Activated T-helper 2 cell treated with anti-CD3 and anti-CD28 coated beads, Interferon-gamma antibody, Interleukin-2, Interleukin-4, amounts not matched to agents 10 μg/mL and 5 μg/mL and 100 μg/mL, durations not matched to agents 14 hours and 24 hours and 36 hours (primary cell): ENCODE measurements at regions of chr7 and their contacts with region 1.

Region 1: GRCh38 chr7:100896732-100897608 is 1.3 kb upstream of the ACHE start:
- DNase-seq: no peak
- H3K4me3 Mint-ChIP-seq: peak overlapping the region; percentile 21
- H3K27ac Mint-ChIP-seq: no peak overlapping the region
- H3K4me1 Mint-ChIP-seq: peaks cover 5% of the 10 kb centered on the region
- H3K27me3 Mint-ChIP-seq: peaks cover 45% of the 10 kb centered on the region

Region 2: GRCh38 chr7:100373261-100373831 is 523.6 kb before region 1 on chr7 and contains the start of gene PILRA:
- intact Hi-C with region 1: no loop called
- DNase-seq: no peak
- H3K4me3 Mint-ChIP-seq: no peak within 1 kb of the TSS
- H3K27ac Mint-ChIP-seq: peak within 1 kb of the TSS; percentile 68
- H3K4me1 Mint-ChIP-seq: peaks cover 11% of the 10 kb centered on the region
- H3K27me3 Mint-ChIP-seq: no peaks in the 10 kb centered on the region
- total RNA-seq, gene PILRA: 12.3 TPM in 2 replicates

Region 3: GRCh38 chr7:100867040-100867775 is 29.8 kb before region 1 on chr7 and contains the start of gene TRIP6:
- intact Hi-C with region 1: no loop called
- DNase-seq: peak; percentile 46
- H3K4me3 Mint-ChIP-seq: peak within 1 kb of the TSS; percentile 94
- H3K27ac Mint-ChIP-seq: peak within 1 kb of the TSS; percentile 93
- H3K4me1 Mint-ChIP-seq: peaks cover 8% of the 10 kb centered on the region
- H3K27me3 Mint-ChIP-seq: no peaks in the 10 kb centered on the region
- total RNA-seq, gene TRIP6: 38.5 and 38.7 TPM in 2 replicates

Region 4: GRCh38 chr7:101059627-101059942 is 162.6 kb after region 1 on chr7:
- intact Hi-C with region 1: loop called (anchors 1 kb)
- DNase-seq: no peak
- H3K4me3 Mint-ChIP-seq: no peak overlapping the region
- H3K27ac Mint-ChIP-seq: no peak overlapping the region
- H3K4me1 Mint-ChIP-seq: peaks cover 2% of the 10 kb centered on the region
- H3K27me3 Mint-ChIP-seq: peaks cover 14% of the 10 kb centered on the region

Region 5: GRCh38 chr7:101077303-101078089 is 180.5 kb after region 1 on chr7:
- intact Hi-C with region 1: loop called (anchors 1 kb)
- DNase-seq: peak; percentile 71
- H3K4me3 Mint-ChIP-seq: no peak overlapping the region
- H3K27ac Mint-ChIP-seq: no peak overlapping the region
- H3K4me1 Mint-ChIP-seq: peaks cover 4% of the 10 kb centered on the region
- H3K27me3 Mint-ChIP-seq: peaks cover 5% of the 10 kb centered on the region

Region 6: DNA sequence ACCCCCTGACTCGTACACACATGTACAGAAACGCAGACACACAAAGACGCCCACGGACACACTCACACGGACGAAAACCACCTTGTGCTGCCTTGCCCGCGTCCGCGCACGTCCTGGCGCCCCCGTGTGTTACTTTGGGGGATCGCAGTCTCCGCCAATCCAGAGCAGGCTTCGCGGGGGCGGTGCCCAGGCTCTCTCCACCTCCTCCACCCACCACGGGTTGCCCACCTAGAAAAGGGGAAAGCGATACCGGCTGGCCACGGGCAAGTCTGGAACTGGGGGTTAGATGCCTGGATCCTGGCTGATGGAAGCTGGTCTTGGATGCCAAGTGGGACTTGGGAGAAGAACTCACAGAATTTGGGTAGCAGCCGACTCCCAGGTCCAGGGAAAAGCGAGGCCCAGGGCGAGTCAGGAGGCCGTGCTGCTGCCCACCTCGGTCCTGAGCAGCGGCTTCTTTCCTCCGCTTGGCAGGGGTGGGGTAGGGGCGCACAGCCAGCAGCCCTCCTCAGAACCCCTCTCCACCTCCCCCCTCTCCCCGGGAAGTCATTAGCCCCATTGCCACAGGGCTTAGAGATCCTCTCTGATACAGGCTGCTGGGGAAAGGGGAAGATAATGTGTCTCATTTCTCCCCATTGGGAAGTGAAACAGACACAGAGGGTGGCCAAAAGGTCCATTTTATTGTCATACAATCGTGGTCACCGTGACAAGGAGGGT is 273.0 kb after region 1 on chr7:
- intact Hi-C with region 1: no loop called
- DNase-seq: peak; percentile 74
- H3K4me3 Mint-ChIP-seq: peak overlapping the region; percentile 51
- H3K27ac Mint-ChIP-seq: no peak overlapping the region
- H3K4me1 Mint-ChIP-seq: peaks cover 58% of the 10 kb centered on the region
- H3K27me3 Mint-ChIP-seq: peaks cover 70% of the 10 kb centered on the region